ENCODE measurements at regions of chr7 and their contacts with region 1.

Region 1: GRCh38 chr7:26200444-26201246 is at the start of gene HNRNPA2B1:
- DNase-seq: peak; percentile 97 to 99 (median 98)
- H3K4me3 ChIP-seq: peak within 1 kb of the TSS; percentile 65 to 99 (median 67)
- H3K4me3 Mint-ChIP-seq: peak within 1 kb of the TSS; percentile 99 to 100
- H3K27ac ChIP-seq: peak within 1 kb of the TSS; percentile 89 to 93
- H3K27ac Mint-ChIP-seq: peak within 1 kb of the TSS; percentile 92 to 100 (median 100)
- H3K4me1 ChIP-seq: peaks cover 45 to 53% of the 10 kb centered on the region in 2 donors
- H3K4me1 Mint-ChIP-seq: peaks cover 47% of the 10 kb centered on the region
- H3K27me3 ChIP-seq: no peaks in the 10 kb centered on the region
- H3K27me3 Mint-ChIP-seq: peaks cover 0 to 4% (median 2%) of the 10 kb centered on the region in 3 donors
- CTCF ChIP-seq: no peak
- polyA plus RNA-seq, gene HNRNPA2B1: 249 to 391 (median 269) TPM

Region 2: DNA sequence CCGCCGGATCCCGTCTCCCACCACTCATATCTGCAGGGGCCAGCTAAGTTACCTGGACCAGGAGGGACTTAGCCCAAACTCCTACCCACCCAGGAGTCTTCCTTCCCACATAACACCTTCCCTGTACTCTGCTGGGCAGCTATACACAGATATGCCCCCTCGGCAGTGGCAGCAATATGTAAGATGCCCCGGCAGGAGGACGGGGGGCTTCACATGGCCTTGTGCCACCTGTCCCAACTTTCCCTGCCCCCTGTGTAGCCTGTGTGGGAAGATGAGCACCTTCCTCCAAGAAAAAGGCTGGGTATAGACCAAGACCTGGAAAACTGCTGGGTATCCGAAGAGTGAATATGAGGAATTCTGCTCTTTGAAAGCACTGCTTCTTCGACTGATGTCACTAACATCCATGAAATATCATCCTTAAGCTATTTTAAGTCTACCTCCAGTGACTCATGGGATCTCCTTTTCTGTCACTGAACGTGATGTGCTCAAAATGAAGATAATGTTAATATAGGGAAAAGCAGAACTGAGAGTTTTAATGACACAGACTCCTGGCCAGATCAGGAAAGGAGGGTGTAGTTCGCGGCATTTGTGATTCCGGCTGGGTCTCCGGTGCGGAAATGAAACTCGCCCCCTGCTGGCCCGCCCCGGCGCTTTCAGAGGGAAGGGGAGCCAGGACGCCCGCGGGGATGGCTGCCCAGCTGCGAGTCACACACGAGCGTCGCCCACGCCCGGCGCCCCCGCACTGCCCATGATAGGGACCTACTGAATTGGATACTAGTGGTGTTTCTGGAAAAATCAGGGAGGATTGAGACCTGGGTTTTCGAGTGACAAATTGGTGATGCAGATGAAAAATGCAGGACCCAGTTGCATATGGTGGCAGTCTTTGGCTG is 305.5 kb before region 1 on chr7:
- intact Hi-C with region 1: loop called (anchors 5 to 10 kb)
- DNase-seq: peak; percentile 87 to 95 (median 89)
- H3K4me3 ChIP-seq: peak overlapping the region in 1 of 3 experiments; percentile 48
- H3K4me3 Mint-ChIP-seq: peak overlapping the region; percentile 50 to 83
- H3K27ac ChIP-seq: no peak overlapping the region
- H3K27ac Mint-ChIP-seq: peak overlapping the region in 6 of 7 donors; percentile 75 to 89 (median 80)
- H3K4me1 ChIP-seq: peaks cover 19 to 29% of the 10 kb centered on the region in 2 donors
- H3K4me1 Mint-ChIP-seq: peaks cover 36% of the 10 kb centered on the region
- H3K27me3 ChIP-seq: peaks cover 80 to 83% of the 10 kb centered on the region in 2 donors
- H3K27me3 Mint-ChIP-seq: peaks cover 74 to 88% (median 78%) of the 10 kb centered on the region in 3 donors
- CTCF ChIP-seq: peak; percentile 88

Region 3: DNA sequence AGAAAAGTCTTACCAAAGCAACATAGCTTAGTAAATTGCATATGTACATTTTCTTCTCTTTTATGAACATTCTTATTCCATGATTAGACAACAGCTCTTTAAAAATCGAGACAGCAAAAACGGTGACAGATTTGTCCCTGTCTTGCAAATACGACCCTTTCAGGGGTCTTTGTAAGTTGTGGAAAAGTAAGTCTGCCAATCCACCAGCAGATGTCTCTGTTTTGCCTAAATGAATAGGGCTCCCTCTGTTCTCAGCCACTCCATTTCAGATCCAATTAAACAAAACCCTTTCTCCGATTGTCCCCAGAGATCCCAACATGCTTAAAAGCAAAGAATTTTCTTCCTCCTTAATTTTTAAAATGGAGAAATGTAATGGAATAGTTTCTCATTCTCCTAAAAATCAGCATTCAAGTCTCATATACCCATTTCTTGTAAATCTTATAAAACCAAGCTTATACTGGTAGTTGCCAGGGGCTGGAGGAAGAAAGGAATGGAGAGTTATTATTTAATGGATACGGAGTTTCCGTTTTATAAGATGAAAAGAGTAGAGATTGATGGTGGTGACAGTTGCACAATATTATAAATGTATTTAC is 109.6 kb before region 1 on chr7:
- intact Hi-C with region 1: loop called (anchors 5 kb)
- DNase-seq: peak in 2 of 3 donors; percentile 62 to 67
- H3K4me3 ChIP-seq: peak overlapping the region in 1 of 3 experiments; percentile 47
- H3K4me3 Mint-ChIP-seq: peak overlapping the region; percentile 17 to 44
- H3K27ac ChIP-seq: no peak overlapping the region
- H3K27ac Mint-ChIP-seq: peak overlapping the region in 3 of 7 donors; percentile 4 to 32 (median 20)
- H3K4me1 ChIP-seq: peaks cover 11 to 13% of the 10 kb centered on the region in 2 donors
- H3K4me1 Mint-ChIP-seq: peaks cover 22% of the 10 kb centered on the region
- H3K27me3 ChIP-seq: no peaks in the 10 kb centered on the region
- H3K27me3 Mint-ChIP-seq: peaks cover 0 to 4% (median 2%) of the 10 kb centered on the region in 3 donors
- CTCF ChIP-seq: peak; percentile 76

Region 4: GRCh38 chr7:26151953-26152781 is 48.5 kb before region 1 on chr7 and contains the start of gene NFE2L3:
- intact Hi-C with region 1: loop called (anchors 2 to 5 kb)
- DNase-seq: peak; percentile 83 to 84 (median 84)
- H3K4me3 ChIP-seq: peak within 1 kb of the TSS; percentile 28 to 75 (median 65)
- H3K4me3 Mint-ChIP-seq: peak within 1 kb of the TSS; percentile 88 to 96
- H3K27ac ChIP-seq: peak within 1 kb of the TSS; percentile 19 to 58
- H3K27ac Mint-ChIP-seq: peak within 1 kb of the TSS; percentile 62 to 93 (median 84)
- H3K4me1 ChIP-seq: peaks cover 40 to 58% of the 10 kb centered on the region in 2 donors
- H3K4me1 Mint-ChIP-seq: peaks cover 49% of the 10 kb centered on the region
- H3K27me3 ChIP-seq: peaks cover 4 to 7% of the 10 kb centered on the region in 2 donors
- H3K27me3 Mint-ChIP-seq: peaks cover 11 to 24% (median 17%) of the 10 kb centered on the region in 3 donors
- CTCF ChIP-seq: no peak
- polyA plus RNA-seq, gene NFE2L3: 4.4 to 17.2 (median 10.6) TPM

Region 5: GRCh38 chr7:26291699-26292538 is 91.3 kb after region 1 on chr7 and contains the start of gene SNX10:
- intact Hi-C with region 1: loop called in 1 of 2 experiments (anchors 5 kb)
- DNase-seq: peak in 2 of 3 donors; percentile 73 to 77
- H3K4me3 ChIP-seq: peak within 1 kb of the TSS; percentile 96 to 99 (median 97)
- H3K4me3 Mint-ChIP-seq: peak within 1 kb of the TSS; percentile 97
- H3K27ac ChIP-seq: peak within 1 kb of the TSS; percentile 92 to 94
- H3K27ac Mint-ChIP-seq: peak within 1 kb of the TSS; percentile 82 to 98 (median 96)
- H3K4me1 ChIP-seq: peaks cover 52 to 67% of the 10 kb centered on the region in 2 donors
- H3K4me1 Mint-ChIP-seq: peaks cover 56% of the 10 kb centered on the region
- H3K27me3 ChIP-seq: no peaks in the 10 kb centered on the region
- H3K27me3 Mint-ChIP-seq: peaks cover 0 to 1% (median 1%) of the 10 kb centered on the region in 3 donors
- CTCF ChIP-seq: no peak
- polyA plus RNA-seq, gene SNX10: 68.0 to 250 (median 219) TPM

Region 6: DNA sequence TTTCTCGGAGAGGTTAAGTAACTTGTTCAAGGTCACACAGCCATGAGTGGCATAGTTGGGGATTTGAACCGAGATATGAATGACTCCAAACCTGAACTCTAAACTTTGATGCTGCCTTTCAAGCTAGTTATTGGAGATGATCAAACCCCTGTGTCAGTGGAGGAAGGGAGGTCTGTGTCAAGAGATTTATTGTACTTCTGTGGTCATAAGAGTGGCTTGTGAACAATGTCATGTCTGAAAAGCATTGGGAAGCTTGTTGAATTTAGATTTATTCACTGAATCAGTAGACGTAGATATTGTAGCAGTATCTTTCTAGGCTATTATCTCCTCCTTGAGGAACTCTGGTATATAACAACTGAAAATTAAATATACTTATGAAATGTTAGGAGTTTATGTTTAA is 118.3 kb after region 1 on chr7:
- intact Hi-C with region 1: loop called in 1 of 2 experiments (anchors 10 kb)
- DNase-seq: no peak
- H3K4me3 ChIP-seq: peak overlapping the region in 1 of 3 experiments; percentile 46
- H3K4me3 Mint-ChIP-seq: peak overlapping the region in 1 of 2 donors; percentile 78
- H3K27ac ChIP-seq: peak overlapping the region in 1 of 2 donors; percentile 81
- H3K27ac Mint-ChIP-seq: peak overlapping the region; percentile 16 to 89 (median 82)
- H3K4me1 ChIP-seq: peaks cover 70 to 75% of the 10 kb centered on the region in 2 donors
- H3K4me1 Mint-ChIP-seq: peaks cover 84% of the 10 kb centered on the region
- H3K27me3 ChIP-seq: no peaks in the 10 kb centered on the region
- H3K27me3 Mint-ChIP-seq: no peaks in the 10 kb centered on the region
- CTCF ChIP-seq: peak; percentile 21

Region 7: GRCh38 chr7:26365077-26365900 is 164.6 kb after region 1 on chr7:
- intact Hi-C with region 1: loop called (anchors 5 to 10 kb)
- DNase-seq: peak; percentile 82 to 90 (median 85)
- H3K4me3 ChIP-seq: no peak overlapping the region
- H3K4me3 Mint-ChIP-seq: no peak overlapping the region
- H3K27ac ChIP-seq: peak overlapping the region in 1 of 2 donors; percentile 65
- H3K27ac Mint-ChIP-seq: peak overlapping the region in 6 of 7 donors; percentile 64 to 90 (median 79)
- H3K4me1 ChIP-seq: peaks cover 14 to 22% of the 10 kb centered on the region in 2 donors
- H3K4me1 Mint-ChIP-seq: peaks cover 26% of the 10 kb centered on the region
- H3K27me3 ChIP-seq: no peaks in the 10 kb centered on the region
- H3K27me3 Mint-ChIP-seq: peaks cover 0 to 2% (median 0%) of the 10 kb centered on the region in 3 donors
- CTCF ChIP-seq: peak; percentile 82

Measured in CD14-positive monocyte (primary cell).